Heart left ventricle (tissue), 16 donors: ENCODE measurements at regions of chr3 and their contacts with region 1.

Region 1: GRCh38 chr3:151838583-151839312 is 24.8 kb downstream of the AADAC start:
- DNase-seq: peak in 2 of 5 donors; percentile 57 to 64
- ATAC-seq: peak; percentile 73 to 91 (median 81)
- H3K4me3 ChIP-seq: peak overlapping the region in 10 of 12 donors; percentile 17 to 45 (median 30)
- H3K27ac ChIP-seq: no peak overlapping the region
- H3K4me1 ChIP-seq: peaks cover 0 to 16% (median 4%) of the 10 kb centered on the region in 12 donors
- H3K27me3 ChIP-seq: no peaks in the 10 kb centered on the region
- CTCF ChIP-seq: peak; percentile 64 to 91 (median 83)
- POLR2A ChIP-seq: no peak

Region 2: GRCh38 chr3:151168269-151169094 is 670.3 kb before region 1 on chr3:
- intact Hi-C with region 1: loop called in 1 of 10 experiments (anchors 5 kb)
- DNase-seq: peak; percentile 70 to 87 (median 77)
- ATAC-seq: peak in 3 of 4 donors; percentile 76 to 83 (median 78)
- H3K4me3 ChIP-seq: no peak overlapping the region
- H3K27ac ChIP-seq: peak overlapping the region in 1 of 12 donors; percentile 86
- H3K4me1 ChIP-seq: peaks cover 0 to 46% (median 0%) of the 10 kb centered on the region in 12 donors
- H3K27me3 ChIP-seq: no peaks in the 10 kb centered on the region
- CTCF ChIP-seq: peak; percentile 56 to 86 (median 74)
- POLR2A ChIP-seq: no peak

Region 3: DNA sequence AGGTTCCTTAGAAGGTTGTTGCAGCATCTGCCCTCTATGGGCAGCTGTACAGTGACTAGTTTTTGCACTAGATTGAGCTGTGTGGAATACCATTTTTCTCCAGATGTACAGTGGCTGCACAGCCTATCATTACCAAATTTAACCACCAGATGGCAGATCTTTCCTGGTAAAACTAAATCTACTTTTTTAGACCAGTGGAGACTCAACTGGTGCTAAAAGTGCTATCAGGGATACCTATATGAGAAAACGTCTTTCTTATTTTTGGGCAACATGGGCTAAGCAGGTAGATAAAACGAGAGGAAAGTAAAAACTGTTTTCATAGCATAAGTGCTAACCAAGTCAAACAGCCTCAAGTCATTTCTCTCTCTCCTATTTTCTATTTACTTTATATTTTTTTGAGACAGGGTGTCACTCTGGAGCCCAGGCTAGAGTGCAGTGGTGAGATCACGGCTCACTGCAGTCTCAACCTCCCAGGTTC is 399.1 kb before region 1 on chr3:
- intact Hi-C with region 1: loop called (anchors 1 to 5 kb)
- DNase-seq: no peak
- ATAC-seq: peak; percentile 67 to 73 (median 71)
- H3K4me3 ChIP-seq: no peak overlapping the region
- H3K27ac ChIP-seq: no peak overlapping the region
- H3K4me1 ChIP-seq: peaks cover 0 to 1% (median 0%) of the 10 kb centered on the region in 12 donors
- H3K27me3 ChIP-seq: no peaks in the 10 kb centered on the region
- CTCF ChIP-seq: peak; percentile 64 to 86 (median 78)
- POLR2A ChIP-seq: no peak

Region 4: DNA sequence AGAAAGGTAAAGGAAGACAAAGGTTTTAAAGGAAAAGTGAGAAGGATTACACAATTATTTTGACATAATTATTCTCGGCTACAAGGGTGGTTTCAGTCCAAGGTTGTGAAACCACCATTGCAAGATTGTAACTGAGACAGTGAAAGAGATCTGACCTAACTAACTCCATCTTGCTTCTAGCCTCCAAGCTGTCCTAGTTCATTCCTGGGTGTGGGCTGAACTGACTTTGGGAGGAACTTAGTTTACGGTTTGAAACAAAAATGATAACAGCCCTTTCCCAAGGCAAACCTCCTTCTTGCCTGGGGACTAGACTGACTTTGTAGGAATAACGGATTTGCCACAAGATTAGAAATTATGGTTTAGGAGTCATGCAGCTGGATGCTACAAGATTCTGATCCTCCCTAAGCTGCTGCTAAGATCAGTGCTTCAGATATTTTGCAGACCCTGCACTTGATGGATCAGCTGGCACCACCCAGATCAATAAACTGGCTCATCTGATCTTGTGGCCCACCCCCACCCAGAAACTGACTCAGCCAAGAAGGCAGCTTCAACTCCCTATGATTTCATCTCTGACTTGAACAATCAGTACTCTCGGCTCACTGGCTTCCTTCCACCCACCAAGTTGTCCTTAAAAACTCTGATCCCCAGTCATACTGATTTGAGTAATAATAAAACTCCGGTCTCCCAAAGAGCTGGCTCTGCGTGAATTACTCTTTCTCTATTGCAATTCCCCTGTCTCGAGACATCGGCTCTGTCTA is 162.7 kb before region 1 on chr3:
- intact Hi-C with region 1: loop called in 1 of 10 experiments (anchors 5 kb)
- DNase-seq: no peak
- ATAC-seq: no peak
- H3K4me3 ChIP-seq: no peak overlapping the region
- H3K27ac ChIP-seq: no peak overlapping the region
- H3K4me1 ChIP-seq: no peaks in the 10 kb centered on the region
- H3K27me3 ChIP-seq: no peaks in the 10 kb centered on the region
- CTCF ChIP-seq: no peak
- POLR2A ChIP-seq: no peak

Region 5: DNA sequence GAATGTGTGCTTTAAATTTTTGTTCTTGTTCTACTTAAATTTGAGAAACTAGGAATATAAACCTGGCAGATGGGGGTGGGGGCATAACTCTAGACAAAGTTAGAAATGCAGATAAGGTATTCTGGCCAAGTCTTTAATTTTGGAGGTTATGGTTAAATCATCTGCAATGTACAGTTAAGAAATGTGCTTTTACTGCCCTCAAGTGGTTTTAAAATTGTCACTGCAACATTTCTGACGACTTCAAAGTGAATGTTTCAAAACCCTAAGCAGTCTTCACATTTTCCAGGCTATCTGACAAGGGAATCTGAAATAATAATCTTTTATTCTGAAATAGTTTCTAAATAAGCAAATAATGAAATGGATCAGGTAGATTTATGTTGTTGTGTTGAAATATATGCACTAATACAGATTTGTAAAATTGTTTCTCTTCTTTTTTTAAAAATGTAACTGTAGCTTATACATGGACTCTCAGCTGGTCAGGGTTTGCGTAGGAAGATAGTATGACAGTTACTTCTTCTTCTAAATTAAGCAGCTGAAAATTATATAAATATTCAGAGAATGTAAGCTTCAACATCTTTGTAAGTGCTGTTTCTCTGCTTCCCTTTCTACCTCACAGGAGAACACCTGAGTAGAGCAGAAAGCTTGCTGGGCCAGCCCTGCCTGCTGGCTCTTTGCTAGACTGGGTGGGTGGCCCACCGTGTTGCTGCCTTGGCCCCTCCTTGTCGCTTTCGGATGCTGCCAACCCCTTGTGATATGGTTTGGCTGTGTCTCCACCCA is 79.7 kb after region 1 on chr3:
- intact Hi-C with region 1: loop called in 5 of 10 experiments (anchors 5 to 10 kb)
- DNase-seq: no peak
- ATAC-seq: peak in 3 of 4 donors; percentile 38 to 67 (median 39)
- H3K4me3 ChIP-seq: no peak overlapping the region
- H3K27ac ChIP-seq: no peak overlapping the region
- H3K4me1 ChIP-seq: peaks cover 0 to under 1% (median 0%) of the 10 kb centered on the region in 12 donors
- H3K27me3 ChIP-seq: no peaks in the 10 kb centered on the region
- CTCF ChIP-seq: peak; percentile 50 to 76 (median 68)
- POLR2A ChIP-seq: no peak